Caco-2 (cell line): ENCODE measurements at regions of chr10 and their contacts with region 1.

Region 1: DNA sequence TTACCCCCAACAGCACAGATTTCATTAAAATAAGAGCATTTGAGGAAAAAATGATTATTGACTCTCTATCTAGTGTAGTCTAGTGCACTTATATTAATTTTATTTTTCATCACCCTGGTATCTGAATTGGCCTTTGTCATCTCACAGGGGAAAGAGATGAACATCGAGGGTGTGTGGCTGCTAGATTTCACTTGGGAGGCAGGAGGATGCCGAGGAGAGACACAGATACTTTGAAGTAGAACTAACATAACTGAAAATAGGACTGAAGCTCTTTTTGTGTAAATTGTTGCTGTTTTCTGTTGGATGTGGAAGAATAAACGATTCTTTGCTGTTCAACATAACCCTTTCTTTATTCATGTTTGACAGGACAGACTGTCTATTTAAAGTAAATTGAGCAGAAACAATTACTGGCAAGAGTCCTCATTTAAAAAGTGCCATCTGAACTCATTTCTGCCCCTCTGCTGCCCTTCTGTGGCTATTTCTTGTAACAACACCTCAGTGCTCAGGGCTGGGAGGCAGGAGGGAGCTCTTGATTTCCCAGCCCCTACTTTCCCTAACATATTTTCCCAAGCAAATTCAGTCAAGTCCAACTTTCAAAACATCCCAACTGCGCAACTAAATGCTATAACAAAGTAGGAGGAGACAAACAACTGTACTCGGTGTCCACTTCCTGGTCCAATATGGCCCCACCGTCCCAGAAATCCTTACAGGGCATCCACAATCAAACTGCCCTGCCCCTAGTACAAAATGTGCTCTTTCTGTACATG is 15.6 kb downstream of the LYZL1 start:
- DNase-seq: peak; percentile 74 to 86
- H3K4me3 ChIP-seq: no peak overlapping the region
- H3K4me3 Mint-ChIP-seq: peak overlapping the region; percentile 55
- H3K27ac Mint-ChIP-seq: peak overlapping the region; percentile 48
- H3K4me1 ChIP-seq: peaks cover 14% of the 10 kb centered on the region; the same call in 1 of the 2 replicates
- H3K4me1 Mint-ChIP-seq: no peaks in the 10 kb centered on the region
- H3K27me3 ChIP-seq: no peaks in the 10 kb centered on the region
- H3K27me3 Mint-ChIP-seq: no peaks in the 10 kb centered on the region
- CTCF ChIP-seq: peak; percentile 95 to 99

Region 2: DNA sequence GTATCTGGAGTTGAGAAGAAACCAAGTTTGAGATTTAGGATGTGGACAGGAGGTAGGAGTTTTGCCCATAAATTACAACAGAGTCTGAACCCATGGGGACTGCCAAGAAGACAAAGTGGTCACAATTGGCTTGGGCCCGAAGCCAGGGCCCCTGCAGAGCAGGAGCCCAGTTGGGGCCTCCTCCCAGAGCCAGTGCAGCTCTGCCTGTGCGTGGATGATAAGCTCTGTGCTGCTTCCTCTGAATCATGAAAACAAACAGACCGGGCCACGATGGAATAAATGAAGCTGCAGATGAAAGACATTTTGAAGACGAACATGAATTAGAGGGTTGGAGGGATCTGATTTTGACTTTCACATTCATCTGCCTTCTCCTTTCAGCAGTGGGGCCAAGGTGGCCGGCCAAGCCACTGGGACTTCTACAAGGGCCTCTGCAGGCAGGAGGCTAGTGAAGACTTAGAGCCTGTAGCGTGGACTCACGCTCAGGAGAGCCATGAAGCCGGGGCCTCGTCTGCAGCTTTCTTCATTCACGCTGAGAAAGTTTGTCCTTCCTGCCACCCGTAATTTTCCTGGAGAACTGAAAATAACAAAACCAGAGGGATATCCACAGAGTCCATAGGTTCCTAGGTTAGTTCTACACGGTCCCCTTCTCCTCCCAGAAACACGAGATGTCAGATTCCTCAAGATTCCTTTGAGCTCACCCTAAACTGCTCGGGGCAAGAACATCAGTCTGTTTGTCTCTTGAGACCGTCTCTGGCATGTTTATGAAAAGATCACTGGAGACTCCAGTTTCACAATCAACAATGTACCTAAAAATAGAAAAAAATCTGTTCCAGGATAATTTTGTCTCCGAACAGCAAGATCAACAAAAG is 172.3 kb before region 1 on chr10:
- CTCF ChIA-PET with region 1: interaction called, 8 read pairs
- POLR2A ChIA-PET with region 1: no interaction called
- intact Hi-C with region 1: loop called (anchors 1 kb)
- DNase-seq: no peak
- H3K4me3 ChIP-seq: no peak overlapping the region
- H3K4me3 Mint-ChIP-seq: no peak overlapping the region
- H3K27ac Mint-ChIP-seq: peak overlapping the region; percentile 51
- H3K4me1 ChIP-seq: peaks cover 33% of the 10 kb centered on the region
- H3K4me1 Mint-ChIP-seq: peaks cover 15% of the 10 kb centered on the region
- H3K27me3 ChIP-seq: no peaks in the 10 kb centered on the region
- H3K27me3 Mint-ChIP-seq: no peaks in the 10 kb centered on the region
- CTCF ChIP-seq: no peak

Region 3: GRCh38 chr10:29263506-29263905 is 40.9 kb before region 1 on chr10:
- CTCF ChIA-PET with region 1: no interaction called
- POLR2A ChIA-PET with region 1: no interaction called
- intact Hi-C with region 1: no loop called
- DNase-seq: no peak
- H3K4me3 ChIP-seq: no peak overlapping the region
- H3K4me3 Mint-ChIP-seq: no peak overlapping the region
- H3K27ac Mint-ChIP-seq: no peak overlapping the region
- H3K4me1 ChIP-seq: peaks cover 6% of the 10 kb centered on the region; the same call in 1 of the 2 replicates
- H3K4me1 Mint-ChIP-seq: peaks cover under 1% of the 10 kb centered on the region
- H3K27me3 ChIP-seq: no peaks in the 10 kb centered on the region
- H3K27me3 Mint-ChIP-seq: no peaks in the 10 kb centered on the region
- CTCF ChIP-seq: no peak

Region 4: DNA sequence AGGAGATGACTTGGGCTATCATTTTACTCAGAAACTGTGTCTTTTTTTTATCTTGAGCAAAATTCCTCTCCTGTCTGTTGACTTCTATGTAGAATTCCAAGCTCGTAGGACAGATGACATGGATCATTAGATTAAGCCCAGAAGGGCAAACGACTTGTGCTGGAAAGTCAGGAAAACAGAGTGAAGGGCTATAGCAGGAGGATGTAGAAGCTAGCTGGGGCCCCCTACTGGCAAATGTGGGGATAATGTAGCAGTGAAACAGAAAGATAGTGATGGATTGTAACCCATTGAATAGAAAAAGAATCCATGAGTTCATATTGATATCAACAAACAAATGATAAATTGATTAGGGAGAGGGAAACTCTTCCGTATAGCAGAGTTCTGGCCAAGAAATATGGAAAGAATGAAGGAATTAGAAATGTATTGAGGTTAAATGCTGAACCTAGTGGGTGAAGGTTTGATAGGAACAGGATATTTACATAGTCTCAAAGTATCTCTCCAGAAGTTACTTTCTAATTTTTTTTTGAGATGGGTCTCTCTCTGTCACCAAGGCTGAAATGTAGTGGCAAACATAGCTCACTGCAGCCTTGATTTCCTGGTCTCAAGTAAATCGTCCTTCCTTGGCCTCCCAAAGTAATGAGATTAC is 88.1 kb after region 1 on chr10:
- CTCF ChIA-PET with region 1: interaction called, 7 read pairs
- POLR2A ChIA-PET with region 1: no interaction called
- intact Hi-C with region 1: loop called (anchors 1 kb)
- DNase-seq: peak; percentile 62 to 76
- H3K4me3 ChIP-seq: no peak overlapping the region
- H3K4me3 Mint-ChIP-seq: no peak overlapping the region
- H3K27ac Mint-ChIP-seq: no peak overlapping the region
- H3K4me1 ChIP-seq: no peaks in the 10 kb centered on the region
- H3K4me1 Mint-ChIP-seq: no peaks in the 10 kb centered on the region
- H3K27me3 ChIP-seq: no peaks in the 10 kb centered on the region
- H3K27me3 Mint-ChIP-seq: peaks cover 5% of the 10 kb centered on the region
- CTCF ChIP-seq: peak; percentile 93 to 95